T-cell (primary cell): ENCODE measurements at regions of chr1 and their contacts with region 1.

Region 1: DNA sequence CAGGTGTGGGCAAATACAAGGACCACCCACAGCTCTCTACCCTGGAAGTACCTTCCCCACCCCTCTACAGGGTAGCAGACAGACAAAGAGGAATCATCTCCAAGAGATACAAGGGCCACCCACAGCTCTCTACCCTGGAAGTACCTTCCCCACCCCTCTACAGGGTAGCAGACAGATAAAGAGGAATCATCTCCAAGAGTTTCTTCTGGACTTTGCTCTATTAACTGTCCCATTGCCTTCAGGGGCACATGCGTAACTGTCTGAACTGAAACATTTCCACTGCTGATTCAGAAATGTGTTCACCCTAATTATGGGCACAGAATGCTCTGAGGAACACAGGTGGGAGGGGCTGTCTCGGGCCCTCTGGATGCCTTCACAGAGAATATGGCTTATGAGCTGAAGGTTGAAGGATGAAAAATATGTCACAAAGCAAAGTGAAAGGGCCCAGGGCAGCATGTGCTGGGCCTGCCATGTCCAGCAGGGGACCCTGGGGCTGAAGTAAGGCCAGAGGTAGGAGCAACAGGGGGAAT is 43.9 kb downstream of the ZNF281 start:
- DNase-seq: no peak
- ATAC-seq: no peak
- H3K4me3 ChIP-seq: no peak overlapping the region
- H3K4me3 Mint-ChIP-seq: no peak overlapping the region
- H3K27ac ChIP-seq: no peak overlapping the region
- H3K27ac Mint-ChIP-seq: no peak overlapping the region
- H3K4me1 ChIP-seq: no peaks in the 10 kb centered on the region
- H3K4me1 Mint-ChIP-seq: no peaks in the 10 kb centered on the region
- H3K27me3 ChIP-seq: no peaks in the 10 kb centered on the region
- H3K27me3 Mint-ChIP-seq: no peaks in the 10 kb centered on the region

Region 2: DNA sequence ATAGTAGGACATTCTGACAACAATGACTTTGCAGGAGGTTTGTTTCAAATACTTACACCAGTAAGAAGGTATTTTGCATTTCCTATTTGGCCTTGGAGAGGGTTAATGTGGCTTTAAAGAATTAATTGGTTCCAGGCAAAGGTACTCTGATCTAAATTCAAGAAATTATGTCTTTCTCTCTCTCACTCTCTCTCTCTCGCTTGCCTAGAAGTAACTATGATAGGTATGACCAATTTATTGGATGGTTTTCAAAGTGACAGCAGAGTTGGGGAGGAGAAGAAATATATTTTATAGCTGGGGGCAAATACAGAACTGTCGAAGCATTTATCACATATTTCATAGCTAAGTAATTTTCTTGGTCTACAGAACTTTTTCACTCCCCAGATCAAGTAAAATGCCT is 1941.5 kb before region 1 on chr1:
- CTCF ChIA-PET with region 1: interaction called in 1 of 2 experiments, 13 read pairs
- POLR2A ChIA-PET with region 1: no interaction called
- DNase-seq: no peak
- ATAC-seq: no peak
- H3K4me3 ChIP-seq: no peak overlapping the region
- H3K4me3 Mint-ChIP-seq: no peak overlapping the region
- H3K27ac ChIP-seq: no peak overlapping the region
- H3K27ac Mint-ChIP-seq: no peak overlapping the region
- H3K4me1 ChIP-seq: no peaks in the 10 kb centered on the region
- H3K4me1 Mint-ChIP-seq: no peaks in the 10 kb centered on the region
- H3K27me3 ChIP-seq: no peaks in the 10 kb centered on the region
- H3K27me3 Mint-ChIP-seq: peaks cover 0 to 3% of the 10 kb centered on the region in 2 donors

Region 3: DNA sequence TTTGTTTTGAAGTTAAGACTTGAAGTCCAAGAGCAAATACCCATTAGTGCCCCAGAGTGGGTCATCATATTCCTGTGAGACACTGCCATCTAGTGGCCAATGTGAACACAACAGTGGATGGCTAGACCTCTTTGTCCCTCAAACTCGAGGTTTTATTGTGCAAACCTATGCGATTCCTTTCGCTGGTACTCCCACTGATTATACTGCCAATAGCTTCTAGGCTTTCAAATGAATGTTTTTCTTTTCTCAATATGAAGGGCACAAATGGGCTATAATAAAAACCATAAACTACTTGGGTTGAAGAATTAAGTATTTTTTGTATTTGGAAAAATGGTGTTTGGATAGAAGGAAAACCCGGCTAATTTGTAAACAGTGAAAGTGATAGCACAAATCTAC is 144.3 kb after region 1 on chr1:
- CTCF ChIA-PET with region 1: no interaction called
- POLR2A ChIA-PET with region 1: no interaction called
- DNase-seq: peak in 34 of 35 experiments; percentile 14 to 83 (median 44)
- ATAC-seq: peak; percentile 65 to 80 (median 73)
- H3K4me3 ChIP-seq: no peak overlapping the region
- H3K4me3 Mint-ChIP-seq: no peak overlapping the region
- H3K27ac ChIP-seq: no peak overlapping the region
- H3K27ac Mint-ChIP-seq: no peak overlapping the region
- H3K4me1 ChIP-seq: no peaks in the 10 kb centered on the region
- H3K4me1 Mint-ChIP-seq: peaks cover 0 to 4% (median 3%) of the 10 kb centered on the region in 3 donors
- H3K27me3 ChIP-seq: peaks cover 0 to 6% of the 10 kb centered on the region in 2 experiments
- H3K27me3 Mint-ChIP-seq: peaks cover 0 to 14% of the 10 kb centered on the region in 2 donors